Psoas muscle (tissue), 8 donors: ENCODE measurements at regions of chr7 and their contacts with region 1.

Region 1: DNA sequence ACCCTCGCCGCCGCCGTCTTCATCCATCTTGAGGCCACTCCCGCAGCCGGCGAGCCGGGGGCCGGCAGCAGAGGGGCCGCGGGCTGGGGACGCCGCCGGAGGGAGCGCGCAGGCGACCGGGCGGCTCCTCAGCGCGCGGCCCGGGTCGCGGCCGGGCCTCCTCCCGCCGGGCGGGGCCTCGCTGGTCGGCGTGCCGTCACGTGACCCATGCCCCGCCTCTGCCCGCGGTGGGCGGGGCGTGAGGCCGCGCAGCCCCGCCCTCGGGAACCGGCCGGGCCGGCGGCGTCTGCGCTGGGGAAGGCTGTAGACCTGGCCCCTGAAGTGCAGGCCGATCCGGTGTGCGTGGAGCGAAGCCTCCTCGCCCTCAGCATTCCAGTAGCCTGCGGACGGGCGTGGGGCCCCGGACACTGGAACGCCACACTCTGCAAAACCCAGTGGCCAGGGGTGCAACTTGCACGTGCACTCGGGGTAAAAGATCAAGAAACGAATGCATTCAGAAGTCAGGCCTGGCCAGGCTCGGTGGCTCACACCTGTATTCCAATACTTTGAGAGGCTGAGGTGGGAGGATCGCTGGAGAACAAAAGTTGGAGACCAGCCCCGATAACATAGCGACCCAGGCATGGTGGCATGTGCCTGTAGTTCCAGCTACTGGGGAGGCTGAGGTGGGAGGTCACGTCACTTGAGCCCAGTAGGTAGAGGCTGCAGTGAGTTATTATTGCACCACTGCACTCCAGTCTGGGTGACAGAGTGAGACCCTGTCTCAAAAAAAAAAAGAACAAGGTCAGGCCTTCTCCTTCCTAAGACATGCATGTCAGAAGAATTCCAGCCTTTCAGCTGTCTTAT is at the start of gene CYTH3:
- DNase-seq: peak; percentile 81 to 90
- ATAC-seq: peak; percentile 95 to 97 (median 96)
- H3K4me3 ChIP-seq: peak within 1 kb of the TSS; percentile 92
- H3K27ac ChIP-seq: peak within 1 kb of the TSS; percentile 81
- H3K4me1 ChIP-seq: peaks cover 34% of the 10 kb centered on the region
- H3K27me3 ChIP-seq: no peaks in the 10 kb centered on the region
- CTCF ChIP-seq: no peak
- total RNA-seq, gene CYTH3: 8.9 to 15.0 (median 14.5) TPM

Region 2: DNA sequence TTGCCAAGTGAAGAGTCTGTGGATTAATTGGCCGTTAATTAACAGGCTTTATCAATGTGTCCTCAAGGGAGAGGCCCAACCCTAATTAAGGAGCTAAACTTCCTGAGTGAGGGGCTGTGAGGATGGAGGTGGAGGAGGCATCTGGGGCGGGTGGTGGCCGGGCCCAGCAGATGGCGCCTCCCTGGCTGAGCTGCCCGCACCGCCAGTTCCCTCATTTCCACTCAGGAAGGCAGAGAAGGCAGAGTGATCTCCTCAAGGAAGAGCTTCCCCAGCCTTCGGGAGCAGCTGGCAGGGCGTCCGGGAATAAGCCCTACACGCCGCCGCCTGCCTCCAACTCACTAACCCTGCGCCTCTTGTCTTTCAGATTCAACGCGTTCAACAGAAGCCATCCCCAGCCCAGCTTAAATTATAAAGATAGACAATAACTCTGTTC is 112.5 kb before region 1 on chr7:
- intact Hi-C with region 1: loop called (anchors 5 kb)
- DNase-seq: peak; percentile 71 to 87
- ATAC-seq: peak; percentile 78 to 86 (median 84)
- H3K4me3 ChIP-seq: no peak overlapping the region
- H3K27ac ChIP-seq: no peak overlapping the region
- H3K4me1 ChIP-seq: no peaks in the 10 kb centered on the region
- H3K27me3 ChIP-seq: no peaks in the 10 kb centered on the region
- CTCF ChIP-seq: peak; percentile 76

Region 3: DNA sequence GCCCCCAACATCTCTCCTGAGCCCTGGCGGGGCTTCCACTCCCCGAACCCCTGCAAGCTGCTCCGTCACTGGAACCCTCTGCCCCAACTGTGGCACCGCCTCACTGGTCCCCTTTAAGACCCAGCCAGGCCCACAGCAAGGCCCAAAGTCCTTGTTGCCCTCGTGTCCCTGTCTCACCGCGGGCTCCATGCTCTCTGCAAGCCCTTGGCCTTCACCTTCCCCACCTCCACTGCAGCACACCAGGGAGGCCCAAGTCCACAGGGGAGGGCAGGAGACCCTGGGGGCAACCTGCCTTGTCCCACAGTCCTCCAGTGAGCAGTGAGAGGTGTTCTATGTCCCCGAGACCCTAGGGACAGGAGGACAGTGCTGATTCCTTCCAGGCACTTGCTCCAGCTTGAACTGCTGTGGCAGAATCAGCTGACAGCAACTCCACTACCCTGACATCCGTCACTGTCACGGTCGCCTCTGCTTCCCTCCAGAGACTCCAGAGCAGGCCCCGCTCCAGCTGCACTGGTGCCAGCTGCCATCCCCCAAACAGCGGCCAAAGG is 105.6 kb before region 1 on chr7:
- intact Hi-C with region 1: loop called (anchors 5 kb)
- DNase-seq: no peak
- ATAC-seq: peak; percentile 44 to 57 (median 52)
- H3K4me3 ChIP-seq: no peak overlapping the region
- H3K27ac ChIP-seq: peak overlapping the region; percentile 4
- H3K4me1 ChIP-seq: peaks cover 19% of the 10 kb centered on the region
- H3K27me3 ChIP-seq: no peaks in the 10 kb centered on the region
- CTCF ChIP-seq: no peak

Region 4: GRCh38 chr7:6181136-6181535 is 91.6 kb before region 1 on chr7:
- intact Hi-C with region 1: loop called in 1 of 2 experiments (anchors 5 kb)
- DNase-seq: no peak
- ATAC-seq: peak; percentile 41 to 77 (median 59)
- H3K4me3 ChIP-seq: no peak overlapping the region
- H3K27ac ChIP-seq: peak overlapping the region; percentile 60
- H3K4me1 ChIP-seq: peaks cover 54% of the 10 kb centered on the region
- H3K27me3 ChIP-seq: no peaks in the 10 kb centered on the region
- CTCF ChIP-seq: no peak

Region 5: DNA sequence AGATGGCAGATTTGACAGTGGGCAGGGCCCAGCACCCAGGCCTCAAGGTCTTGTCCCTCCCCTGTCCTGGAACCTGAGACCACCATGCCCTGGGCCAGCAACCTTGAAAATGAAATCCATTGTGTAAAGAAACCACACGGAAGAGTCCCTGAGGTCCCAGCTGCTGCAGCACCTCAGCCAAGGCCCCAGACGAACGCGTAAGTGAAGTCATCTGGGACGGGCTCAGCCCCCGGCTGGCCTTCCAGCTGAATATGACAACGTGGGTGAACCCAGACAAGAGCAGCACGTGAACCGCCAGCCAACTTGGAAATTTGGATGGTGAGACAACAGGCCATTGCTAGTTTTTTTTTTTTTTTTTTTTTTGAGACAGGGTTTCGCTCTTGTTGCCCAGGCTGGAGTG is 70.6 kb before region 1 on chr7:
- intact Hi-C with region 1: loop called in 1 of 2 experiments (anchors 5 kb)
- DNase-seq: peak; percentile 35 to 71
- ATAC-seq: peak; percentile 74 to 86 (median 85)
- H3K4me3 ChIP-seq: no peak overlapping the region
- H3K27ac ChIP-seq: peak overlapping the region; percentile 60
- H3K4me1 ChIP-seq: peaks cover 53% of the 10 kb centered on the region
- H3K27me3 ChIP-seq: no peaks in the 10 kb centered on the region
- CTCF ChIP-seq: no peak

Region 6: GRCh38 chr7:6317797-6318438 is 45.2 kb after region 1 on chr7:
- intact Hi-C with region 1: loop called in 1 of 2 experiments (anchors 5 kb)
- DNase-seq: peak; percentile 86 to 90
- ATAC-seq: peak; percentile 65 to 90 (median 88)
- H3K4me3 ChIP-seq: peak overlapping the region; percentile 19
- H3K27ac ChIP-seq: peak overlapping the region; percentile 64
- H3K4me1 ChIP-seq: peaks cover 15% of the 10 kb centered on the region
- H3K27me3 ChIP-seq: no peaks in the 10 kb centered on the region
- CTCF ChIP-seq: no peak